ENCODE measurements at regions of chr22 and their contacts with region 1.

Region 1: DNA sequence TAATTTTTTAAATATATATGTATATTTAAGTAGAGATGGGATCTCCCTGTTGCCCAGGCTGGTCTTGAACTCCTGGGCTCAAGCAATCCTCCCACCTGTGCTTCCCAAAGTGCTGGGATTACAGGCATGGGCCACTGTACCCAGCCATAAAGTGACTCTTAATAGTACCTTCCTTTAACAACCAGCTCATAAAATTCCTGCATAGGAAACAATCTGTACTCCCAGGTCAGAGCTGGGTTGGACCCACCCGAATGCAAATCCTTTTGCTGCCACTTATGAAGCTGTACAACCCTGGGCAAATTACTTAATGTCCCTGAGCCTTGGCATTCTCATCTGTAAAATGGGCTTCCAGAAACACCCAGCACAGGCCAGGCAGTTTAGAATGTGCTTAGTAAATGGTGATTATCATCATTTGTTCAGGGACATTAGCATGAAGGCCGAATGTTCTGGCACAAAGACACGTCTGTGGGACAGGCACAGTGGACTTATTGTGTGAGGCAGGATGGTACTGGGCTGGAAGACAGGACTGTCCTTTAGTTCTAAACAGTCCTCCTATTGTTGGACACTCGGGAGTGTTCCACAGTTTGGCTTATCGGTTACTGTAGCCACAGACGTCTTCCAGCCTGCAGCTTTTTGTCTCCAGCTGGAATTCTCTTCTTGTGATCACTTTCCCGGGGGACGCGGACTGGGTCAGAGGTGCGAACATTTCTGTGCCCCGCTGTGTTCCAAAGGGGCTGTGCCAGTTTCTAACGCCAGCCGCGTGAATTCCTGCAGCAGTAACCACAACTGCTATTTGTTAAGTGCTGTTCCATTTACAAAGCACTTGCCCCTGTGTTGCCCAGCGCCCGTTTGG is 6.0 kb downstream of the PDXP start:
- DNase-seq: no peak
- ATAC-seq: no peak
- H3K4me3 ChIP-seq: no peak overlapping the region
- H3K27ac ChIP-seq: no peak overlapping the region
- H3K4me1 ChIP-seq: peaks cover 17% of the 10 kb centered on the region
- H3K27me3 ChIP-seq: no peaks in the 10 kb centered on the region
- CTCF ChIP-seq: no peak

Region 2: DNA sequence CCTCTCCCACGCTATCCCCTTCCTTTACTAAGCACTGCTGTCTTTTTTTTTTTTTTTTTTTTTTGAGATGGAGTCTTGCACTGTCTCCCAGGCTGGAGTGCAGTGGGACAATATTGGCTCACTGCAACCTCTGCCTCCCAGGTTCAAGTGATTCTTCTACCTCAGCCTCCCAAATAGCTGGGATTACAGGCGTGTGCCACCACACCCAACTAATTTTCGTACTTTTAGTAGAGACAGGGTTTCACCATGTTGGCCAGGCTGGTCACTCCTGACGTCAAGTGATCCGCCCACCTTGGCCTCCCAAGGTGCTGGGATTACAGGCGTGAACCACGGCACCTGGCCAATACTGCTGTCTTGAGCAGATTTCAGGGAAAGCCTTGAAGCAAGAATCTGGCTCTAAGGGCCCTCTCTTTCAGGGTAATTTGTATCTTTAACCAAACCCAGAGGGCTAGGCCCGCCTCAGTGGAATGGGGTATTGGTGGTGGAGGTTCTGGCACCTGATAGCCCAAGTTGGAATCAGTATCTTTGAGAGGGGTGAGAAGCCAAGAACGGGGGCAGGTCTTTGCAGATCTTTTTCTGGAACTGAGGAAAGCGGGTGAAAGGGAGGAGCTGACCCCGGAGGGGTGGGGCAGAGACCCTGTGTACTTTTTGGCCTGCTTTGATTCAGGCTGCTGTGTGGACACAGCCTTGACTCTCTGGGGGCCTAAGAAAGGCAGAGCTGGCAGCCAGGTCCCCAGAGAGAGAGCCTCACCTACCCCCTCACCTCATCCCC is 69.3 kb after region 1 on chr22:
- CTCF ChIA-PET with region 1: interaction called, 18 read pairs
- POLR2A ChIA-PET with region 1: interaction called, 8 read pairs
- in situ Hi-C with region 1: no loop called
- intact Hi-C with region 1: no loop called
- DNase-seq: no peak
- ATAC-seq: no peak
- H3K4me3 ChIP-seq: no peak overlapping the region
- H3K27ac ChIP-seq: no peak overlapping the region
- H3K4me1 ChIP-seq: no peaks in the 10 kb centered on the region
- H3K27me3 ChIP-seq: no peaks in the 10 kb centered on the region
- CTCF ChIP-seq: no peak

Region 3: GRCh38 chr22:37768273-37768672 is 103.8 kb after region 1 on chr22:
- CTCF ChIA-PET with region 1: no interaction called
- POLR2A ChIA-PET with region 1: no interaction called
- in situ Hi-C with region 1: no loop called
- intact Hi-C with region 1: no loop called
- DNase-seq: no peak
- ATAC-seq: no peak
- H3K4me3 ChIP-seq: no peak overlapping the region
- H3K27ac ChIP-seq: no peak overlapping the region
- H3K4me1 ChIP-seq: no peaks in the 10 kb centered on the region
- H3K27me3 ChIP-seq: no peaks in the 10 kb centered on the region
- CTCF ChIP-seq: no peak